T-cell (primary cell): ENCODE measurements at regions of chr15 and their contacts with region 1.

Region 1: GRCh38 chr15:78101463-78102139 is 9.2 kb downstream of the SH2D7 start:
- DNase-seq: no peak
- ATAC-seq: no peak
- H3K4me3 ChIP-seq: no peak overlapping the region
- H3K4me3 Mint-ChIP-seq: no peak overlapping the region
- H3K27ac ChIP-seq: no peak overlapping the region
- H3K27ac Mint-ChIP-seq: peak overlapping the region in 1 of 2 donors; percentile 68
- H3K4me1 ChIP-seq: peaks cover 17 to 44% of the 10 kb centered on the region in 2 experiments
- H3K4me1 Mint-ChIP-seq: peaks cover 32 to 45% (median 41%) of the 10 kb centered on the region in 3 donors
- H3K27me3 ChIP-seq: no peaks in the 10 kb centered on the region
- H3K27me3 Mint-ChIP-seq: no peaks in the 10 kb centered on the region

Region 2: GRCh38 chr15:77889009-77889806 is 212.4 kb before region 1 on chr15:
- CTCF ChIA-PET with region 1: no interaction called
- POLR2A ChIA-PET with region 1: no interaction called
- DNase-seq: no peak
- ATAC-seq: no peak
- H3K4me3 ChIP-seq: no peak overlapping the region
- H3K4me3 Mint-ChIP-seq: no peak overlapping the region
- H3K27ac ChIP-seq: no peak overlapping the region
- H3K27ac Mint-ChIP-seq: no peak overlapping the region
- H3K4me1 ChIP-seq: no peaks in the 10 kb centered on the region
- H3K4me1 Mint-ChIP-seq: no peaks in the 10 kb centered on the region
- H3K27me3 ChIP-seq: no peaks in the 10 kb centered on the region
- H3K27me3 Mint-ChIP-seq: no peaks in the 10 kb centered on the region

Region 3: DNA sequence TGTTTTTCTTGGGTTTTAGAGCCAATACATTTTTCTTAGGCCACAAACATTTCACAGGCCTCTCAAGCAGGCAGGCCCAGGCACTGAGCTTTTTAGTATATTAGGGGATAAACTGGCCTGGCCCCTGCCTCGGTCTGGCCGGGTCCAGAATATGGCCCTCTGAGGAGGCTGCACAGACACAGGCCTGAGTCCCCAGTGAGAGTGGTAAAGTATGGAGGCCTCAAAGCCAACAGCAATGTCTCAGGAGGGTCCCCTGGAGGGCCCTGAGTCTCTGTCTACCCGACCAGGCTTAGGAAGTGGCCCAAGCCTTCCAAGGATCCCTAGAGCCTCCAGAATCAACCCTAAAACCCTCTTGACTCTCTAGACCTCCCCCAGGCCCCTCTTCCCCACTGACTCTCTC is 20.0 kb before region 1 on chr15:
- CTCF ChIA-PET with region 1: no interaction called
- POLR2A ChIA-PET with region 1: interaction called in 1 of 2 experiments, 12 read pairs
- DNase-seq: no peak
- ATAC-seq: no peak
- H3K4me3 ChIP-seq: no peak overlapping the region
- H3K4me3 Mint-ChIP-seq: no peak overlapping the region
- H3K27ac ChIP-seq: no peak overlapping the region
- H3K27ac Mint-ChIP-seq: no peak overlapping the region
- H3K4me1 ChIP-seq: peaks cover 3 to 12% of the 10 kb centered on the region in 2 experiments
- H3K4me1 Mint-ChIP-seq: peaks cover 6 to 13% (median 10%) of the 10 kb centered on the region in 3 donors
- H3K27me3 ChIP-seq: no peaks in the 10 kb centered on the region
- H3K27me3 Mint-ChIP-seq: no peaks in the 10 kb centered on the region

Region 4: DNA sequence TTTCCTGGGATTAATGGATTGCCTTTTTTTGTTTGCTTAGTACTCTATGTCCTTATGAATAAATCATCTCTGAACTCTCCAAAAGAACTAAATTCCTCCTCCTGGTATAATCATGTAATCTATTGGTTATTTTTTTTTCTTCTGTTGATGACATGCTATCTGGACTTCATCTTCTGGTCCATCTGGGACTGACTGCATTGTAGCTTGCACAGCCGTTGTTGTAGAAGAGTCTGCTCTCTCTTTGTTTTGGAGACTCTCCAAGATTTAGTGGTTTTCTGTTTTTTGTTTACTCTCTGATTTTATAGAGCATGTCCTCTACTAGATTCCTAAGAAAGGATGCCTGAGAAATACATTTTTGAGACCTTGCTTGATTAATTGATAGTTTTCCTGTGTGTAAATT is 355.5 kb after region 1 on chr15:
- CTCF ChIA-PET with region 1: no interaction called
- POLR2A ChIA-PET with region 1: no interaction called
- DNase-seq: no peak
- ATAC-seq: no peak
- H3K4me3 ChIP-seq: no peak overlapping the region
- H3K4me3 Mint-ChIP-seq: peak overlapping the region in 2 of 3 donors; percentile 2 to 22
- H3K27ac ChIP-seq: no peak overlapping the region
- H3K27ac Mint-ChIP-seq: peak overlapping the region; percentile 49 to 70
- H3K4me1 ChIP-seq: peaks cover 20% of the 10 kb centered on the region in 2 experiments
- H3K4me1 Mint-ChIP-seq: peaks cover 85 to 92% (median 87%) of the 10 kb centered on the region in 3 donors
- H3K27me3 ChIP-seq: no peaks in the 10 kb centered on the region
- H3K27me3 Mint-ChIP-seq: no peaks in the 10 kb centered on the region

Region 5: DNA sequence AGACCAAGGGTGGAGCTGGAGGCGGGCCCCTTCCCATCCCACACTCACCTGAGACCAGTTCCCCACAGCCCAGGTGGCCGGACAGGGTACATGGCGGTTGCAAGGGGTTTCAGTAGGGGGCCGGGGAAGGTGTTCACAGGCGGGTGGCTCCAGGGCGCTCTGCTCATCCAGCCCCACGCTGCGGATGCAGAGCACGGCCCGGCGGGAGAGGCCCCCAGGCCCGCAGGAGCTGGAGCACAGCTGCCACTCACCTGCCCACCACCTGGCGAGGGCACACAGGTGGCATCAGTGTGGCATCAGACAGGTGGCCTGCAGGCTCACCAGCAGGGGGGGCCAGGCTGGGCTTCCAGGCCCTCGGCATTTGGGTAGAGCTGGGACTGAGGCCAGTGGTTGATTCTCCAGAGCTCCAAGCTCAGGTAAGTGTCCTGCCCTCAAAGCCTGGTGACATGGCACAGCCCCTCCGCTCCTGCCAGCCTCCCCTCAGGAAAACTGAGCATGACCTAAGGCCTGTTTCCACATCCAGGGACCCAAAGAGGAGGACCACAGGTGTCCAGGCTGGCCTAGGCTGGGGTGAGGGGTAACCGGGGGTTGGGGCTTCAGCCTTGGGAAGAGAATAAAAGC is 665.8 kb after region 1 on chr15:
- CTCF ChIA-PET with region 1: no interaction called
- POLR2A ChIA-PET with region 1: no interaction called
- DNase-seq: no peak
- ATAC-seq: no peak
- H3K4me3 ChIP-seq: no peak overlapping the region
- H3K4me3 Mint-ChIP-seq: no peak overlapping the region
- H3K27ac ChIP-seq: no peak overlapping the region
- H3K27ac Mint-ChIP-seq: no peak overlapping the region
- H3K4me1 ChIP-seq: peaks cover 0 to 3% of the 10 kb centered on the region in 2 experiments
- H3K4me1 Mint-ChIP-seq: peaks cover 3 to 5% (median 5%) of the 10 kb centered on the region in 3 donors
- H3K27me3 ChIP-seq: peaks cover 0 to 4% of the 10 kb centered on the region in 2 experiments
- H3K27me3 Mint-ChIP-seq: no peaks in the 10 kb centered on the region